B cell (primary cell): ENCODE measurements at regions of chr4 and their contacts with region 1.

Region 1: GRCh38 chr4:1011022-1011694 is at the start of gene FGFRL1:
- DNase-seq: peak; percentile 92
- ATAC-seq: peak; percentile 63
- H3K4me3 ChIP-seq: peak within 1 kb of the TSS in 4 of 5 experiments; percentile 60 to 74 (median 66)
- H3K4me3 Mint-ChIP-seq: peak within 1 kb of the TSS; percentile 91
- H3K27ac ChIP-seq: peak within 1 kb of the TSS; percentile 36 to 38
- H3K27ac Mint-ChIP-seq: peak within 1 kb of the TSS; percentile 89
- H3K4me1 ChIP-seq: peaks cover 24 to 30% of the 10 kb centered on the region in 2 donors
- H3K4me1 Mint-ChIP-seq: peaks cover 20% of the 10 kb centered on the region
- H3K27me3 ChIP-seq: peaks cover 0 to 24% (median 12%) of the 10 kb centered on the region in 4 experiments
- H3K27me3 Mint-ChIP-seq: peaks cover 29% of the 10 kb centered on the region
- CTCF ChIP-seq: no peak
- total RNA-seq, gene FGFRL1: 28.5 and 28.9 TPM in 2 replicates

Region 2: DNA sequence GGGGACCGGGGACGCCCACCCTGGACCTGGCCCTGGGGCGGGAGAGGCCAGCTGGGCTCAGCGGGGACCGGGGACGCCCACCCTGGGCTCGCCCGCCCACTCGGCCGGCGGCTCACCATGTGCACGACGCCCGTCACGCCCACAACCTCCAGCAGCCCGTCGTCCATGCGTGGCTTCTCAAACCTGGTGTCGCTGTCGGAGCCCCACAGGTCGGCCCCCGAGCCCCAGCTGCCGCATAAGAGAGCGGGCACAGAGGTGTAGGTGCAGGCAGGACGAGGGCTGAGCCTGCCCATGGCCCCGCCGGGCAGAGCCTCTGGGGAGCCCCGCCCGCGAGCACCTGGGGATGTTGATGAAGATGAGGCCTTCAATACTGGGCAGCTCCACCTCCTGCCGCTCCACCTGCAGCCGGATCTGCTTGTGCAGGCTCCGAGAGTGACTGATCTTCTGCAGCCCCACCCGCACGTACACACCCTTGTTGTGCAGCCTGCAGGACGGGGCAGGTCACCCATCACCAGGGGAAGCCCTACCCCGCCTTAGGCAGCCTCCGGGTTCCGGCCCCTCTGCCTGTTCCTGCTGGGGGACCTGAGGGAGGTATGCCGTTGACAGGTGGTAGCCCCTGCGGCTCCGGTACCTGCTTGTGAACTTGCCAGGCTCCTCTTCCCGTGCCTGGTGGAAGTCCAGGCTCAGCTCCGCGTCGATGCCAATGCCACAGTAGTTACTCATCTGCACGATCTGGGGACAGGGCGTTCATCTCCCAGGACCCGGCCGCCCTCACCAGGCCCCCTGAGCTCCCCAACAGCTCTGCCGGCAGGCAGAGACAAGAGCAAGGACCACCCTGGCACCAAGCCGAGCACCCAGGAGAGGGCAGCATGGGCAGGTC is 49.6 kb before region 1 on chr4:
- CTCF ChIA-PET with region 1: no interaction called
- POLR2A ChIA-PET with region 1: no interaction called
- intact Hi-C with region 1: no loop called
- DNase-seq: no peak
- ATAC-seq: peak; percentile 37
- H3K4me3 ChIP-seq: no peak overlapping the region
- H3K4me3 Mint-ChIP-seq: no peak overlapping the region
- H3K27ac ChIP-seq: no peak overlapping the region
- H3K27ac Mint-ChIP-seq: no peak overlapping the region
- H3K4me1 ChIP-seq: no peaks in the 10 kb centered on the region
- H3K4me1 Mint-ChIP-seq: peaks cover 1% of the 10 kb centered on the region
- H3K27me3 ChIP-seq: no peaks in the 10 kb centered on the region
- H3K27me3 Mint-ChIP-seq: no peaks in the 10 kb centered on the region
- CTCF ChIP-seq: no peak

Region 3: GRCh38 chr4:973431-974397 is 37.4 kb before region 1 on chr4 and contains the start of gene DGKQ:
- CTCF ChIA-PET with region 1: no interaction called
- POLR2A ChIA-PET with region 1: no interaction called
- intact Hi-C with region 1: loop called (anchors 1 kb)
- DNase-seq: peak; percentile 92
- ATAC-seq: peak; percentile 99
- H3K4me3 ChIP-seq: peak within 1 kb of the TSS; percentile 23 to 76 (median 66)
- H3K4me3 Mint-ChIP-seq: peak within 1 kb of the TSS; percentile 61
- H3K27ac ChIP-seq: no peak within 1 kb of the TSS
- H3K27ac Mint-ChIP-seq: peak within 1 kb of the TSS; percentile 41
- H3K4me1 ChIP-seq: peaks cover 10 to 17% of the 10 kb centered on the region in 2 donors
- H3K4me1 Mint-ChIP-seq: peaks cover 9% of the 10 kb centered on the region
- H3K27me3 ChIP-seq: peaks cover 0 to under 1% (median 0%) of the 10 kb centered on the region in 4 experiments
- H3K27me3 Mint-ChIP-seq: no peaks in the 10 kb centered on the region
- CTCF ChIP-seq: no peak
- total RNA-seq, gene DGKQ: 30.4 and 34.9 TPM in 2 replicates

Region 4: GRCh38 chr4:1026115-1026514 is 15.0 kb after region 1 on chr4:
- CTCF ChIA-PET with region 1: no interaction called
- POLR2A ChIA-PET with region 1: interaction called, 13 read pairs
- intact Hi-C with region 1: loop called (anchors 1 kb)
- DNase-seq: peak; percentile 84
- ATAC-seq: peak; percentile 78
- H3K4me3 ChIP-seq: no peak overlapping the region
- H3K4me3 Mint-ChIP-seq: peak overlapping the region; percentile 64
- H3K27ac ChIP-seq: peak overlapping the region in 1 of 2 donors; percentile 18
- H3K27ac Mint-ChIP-seq: peak overlapping the region; percentile 86
- H3K4me1 ChIP-seq: peaks cover 23 to 36% of the 10 kb centered on the region in 2 donors
- H3K4me1 Mint-ChIP-seq: peaks cover 30% of the 10 kb centered on the region
- H3K27me3 ChIP-seq: peaks cover 0 to 14% (median 0%) of the 10 kb centered on the region in 4 experiments
- H3K27me3 Mint-ChIP-seq: no peaks in the 10 kb centered on the region
- CTCF ChIP-seq: no peak

Region 5: DNA sequence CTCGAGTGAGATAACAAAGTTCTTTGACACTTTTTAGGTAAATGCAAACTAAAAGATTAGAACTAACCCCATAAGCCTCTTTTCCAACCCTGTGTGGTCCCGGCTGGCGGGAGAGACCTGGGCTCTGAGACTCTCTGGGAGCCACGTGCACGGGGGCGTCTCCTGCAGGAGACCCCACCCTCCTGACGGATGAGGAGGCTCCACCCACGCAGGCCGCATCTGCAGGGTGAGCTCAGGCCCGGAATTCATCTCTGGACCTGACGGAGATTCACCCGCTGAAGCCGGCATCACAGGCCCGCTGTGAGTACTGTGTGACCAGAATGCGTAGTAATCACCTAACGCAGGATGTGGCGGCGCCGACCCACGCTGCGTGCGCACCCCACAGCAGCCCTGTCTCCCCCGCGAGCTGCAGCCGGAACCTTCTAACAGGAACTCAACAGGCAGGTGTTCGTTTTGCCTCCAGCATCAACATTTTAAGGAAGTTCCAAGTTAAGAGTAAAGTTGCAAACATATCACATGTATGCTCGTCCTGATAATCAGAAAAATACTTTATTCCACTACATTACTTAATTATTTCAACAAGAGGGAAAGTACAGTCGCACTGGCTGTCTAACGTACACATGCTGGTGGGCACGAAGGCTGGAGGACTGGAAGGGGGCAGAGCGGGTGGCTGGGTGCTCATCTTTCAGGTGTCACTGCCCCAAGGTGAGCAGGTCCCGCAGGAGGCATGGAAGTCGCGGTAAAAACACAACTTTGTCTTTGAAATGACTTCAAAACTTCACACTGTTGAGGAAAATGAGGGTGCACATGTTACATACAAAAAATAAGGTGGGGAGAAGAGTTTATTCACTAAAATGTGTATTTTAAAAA is 44.8 kb after region 1 on chr4:
- CTCF ChIA-PET with region 1: no interaction called
- POLR2A ChIA-PET with region 1: no interaction called
- intact Hi-C with region 1: loop called (anchors 1 kb)
- DNase-seq: peak; percentile 95
- ATAC-seq: peak; percentile 97
- H3K4me3 ChIP-seq: peak overlapping the region; percentile 36 to 66 (median 51)
- H3K4me3 Mint-ChIP-seq: peak overlapping the region; percentile 70
- H3K27ac ChIP-seq: peak overlapping the region; percentile 73 to 76
- H3K27ac Mint-ChIP-seq: peak overlapping the region; percentile 84
- H3K4me1 ChIP-seq: peaks cover 11 to 17% of the 10 kb centered on the region in 2 donors
- H3K4me1 Mint-ChIP-seq: peaks cover 10% of the 10 kb centered on the region
- H3K27me3 ChIP-seq: peaks cover 0 to 19% (median 3%) of the 10 kb centered on the region in 4 experiments
- H3K27me3 Mint-ChIP-seq: peaks cover 10% of the 10 kb centered on the region
- CTCF ChIP-seq: no peak

Region 6: DNA sequence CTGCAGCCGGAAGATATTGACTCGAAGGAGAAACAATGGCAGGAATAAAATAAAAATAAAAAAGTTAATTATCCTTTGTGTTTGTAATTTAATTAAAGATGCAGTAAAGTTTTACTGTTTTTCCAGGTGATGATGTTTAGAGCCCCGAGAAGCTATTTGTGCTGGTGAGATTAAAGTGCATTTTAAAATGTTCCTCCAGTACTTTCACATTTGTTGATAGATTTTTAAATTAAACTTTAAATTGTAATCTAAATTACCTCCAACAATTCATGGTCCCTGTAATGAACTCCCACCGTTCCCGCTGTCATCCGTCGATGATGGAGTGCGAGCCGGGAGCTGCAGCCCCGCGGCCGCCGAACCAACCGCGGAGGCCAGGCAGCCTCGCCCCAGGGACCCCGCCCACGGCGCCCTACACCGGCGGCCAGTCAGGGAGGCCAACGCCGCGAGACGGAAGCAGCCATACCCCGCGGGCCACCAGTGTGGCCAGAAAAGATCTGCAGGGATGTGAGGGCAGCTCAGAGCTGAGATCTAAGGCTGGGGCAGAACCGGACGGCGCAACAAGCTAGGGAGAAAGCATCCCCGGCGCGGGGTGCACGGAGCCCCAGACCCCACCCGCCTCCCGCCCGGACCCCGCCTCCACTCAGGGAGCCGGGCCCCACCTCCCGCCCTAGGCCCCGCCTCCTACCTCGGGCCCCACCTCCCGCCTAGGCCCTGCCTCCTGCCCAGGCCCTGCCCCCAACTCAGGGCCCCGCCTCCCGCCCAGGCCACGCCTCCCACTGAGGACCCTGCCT is 568.9 kb after region 1 on chr4:
- CTCF ChIA-PET with region 1: no interaction called
- POLR2A ChIA-PET with region 1: no interaction called
- intact Hi-C with region 1: loop called (anchors 5 kb)
- DNase-seq: peak; percentile 95
- ATAC-seq: peak; percentile 79
- H3K4me3 ChIP-seq: peak overlapping the region; percentile 72 to 84 (median 76)
- H3K4me3 Mint-ChIP-seq: peak overlapping the region; percentile 85
- H3K27ac ChIP-seq: peak overlapping the region; percentile 46 to 71
- H3K27ac Mint-ChIP-seq: peak overlapping the region; percentile 83
- H3K4me1 ChIP-seq: peaks cover 0 to 4% of the 10 kb centered on the region in 2 donors
- H3K4me1 Mint-ChIP-seq: peaks cover 4% of the 10 kb centered on the region
- H3K27me3 ChIP-seq: no peaks in the 10 kb centered on the region
- H3K27me3 Mint-ChIP-seq: no peaks in the 10 kb centered on the region
- CTCF ChIP-seq: no peak